RWPE1 (cell line): ENCODE measurements at regions of chr16 and their contacts with region 1.

Region 1: DNA sequence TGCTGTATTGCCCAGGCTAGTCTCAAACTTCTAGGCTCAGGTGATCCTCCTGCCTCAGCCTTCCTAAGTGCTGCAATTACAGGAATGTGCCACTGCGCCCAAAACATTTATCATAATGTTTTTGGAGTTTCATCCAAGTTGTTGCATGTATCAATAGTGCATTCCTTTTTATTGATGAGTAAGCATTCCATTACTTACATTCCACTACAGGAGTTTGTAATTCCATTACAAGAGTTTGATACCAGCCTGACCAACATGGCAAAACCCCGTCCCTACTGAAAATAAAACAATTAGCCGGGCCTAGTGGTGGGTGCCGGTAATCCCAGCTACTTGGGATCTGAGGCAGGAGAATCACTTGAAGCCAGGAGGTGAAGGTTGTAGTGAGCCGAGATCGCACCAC is 216.5 kb downstream of the SNX29 start:
- DNase-seq: no peak
- H3K27ac ChIP-seq: no peak overlapping the region
- CTCF ChIP-seq: no peak

Region 2: GRCh38 chr16:12178251-12178990 is 14.6 kb before region 1 on chr16:
- CTCF ChIA-PET with region 1: interaction called, 3 read pairs
- POLR2A ChIA-PET with region 1: interaction called, 16 read pairs
- DNase-seq: no peak
- H3K27ac ChIP-seq: no peak overlapping the region
- CTCF ChIP-seq: no peak

Region 3: DNA sequence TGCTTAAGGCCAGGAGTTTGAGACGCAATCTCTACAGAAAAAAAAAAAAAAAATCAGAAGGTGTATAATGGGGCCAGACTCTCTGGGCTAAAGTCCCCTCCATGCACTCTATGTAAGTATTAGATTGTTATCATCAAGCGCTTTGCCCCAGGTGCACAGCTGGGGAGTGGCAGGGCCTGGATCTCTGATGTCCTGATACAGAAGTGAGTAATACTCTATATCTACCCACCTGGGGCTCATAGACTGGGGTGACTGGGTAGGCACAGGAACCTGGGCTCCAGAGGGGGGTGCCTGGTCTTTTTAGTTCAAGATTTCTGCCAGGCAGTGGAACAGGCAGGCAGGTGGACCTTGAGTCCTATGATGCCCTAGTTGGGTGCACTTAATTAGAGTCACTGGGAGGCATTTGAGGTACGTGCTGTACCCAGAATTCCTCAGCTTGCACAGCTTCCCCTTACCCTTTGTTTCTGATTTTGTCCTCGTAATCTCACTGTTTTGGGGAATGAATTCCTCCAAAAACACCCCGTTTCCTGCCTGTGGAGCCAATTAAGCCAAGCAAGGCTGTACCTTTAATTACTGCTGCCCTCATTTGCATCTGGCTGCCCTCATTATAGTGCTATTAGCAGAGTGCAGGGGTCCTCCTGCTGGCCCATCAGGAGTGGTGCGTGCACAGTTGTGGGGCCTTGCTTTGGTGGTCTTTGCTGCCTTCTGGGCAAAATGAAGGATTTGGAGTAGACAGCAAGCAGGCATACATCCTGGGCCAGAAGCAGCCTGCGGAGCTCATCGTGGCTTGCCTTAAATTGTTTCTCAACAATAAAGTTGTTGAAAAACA is 22.5 kb after region 1 on chr16:
- CTCF ChIA-PET with region 1: no interaction called
- POLR2A ChIA-PET with region 1: no interaction called
- DNase-seq: no peak
- H3K27ac ChIP-seq: no peak overlapping the region
- CTCF ChIP-seq: no peak

Region 4: DNA sequence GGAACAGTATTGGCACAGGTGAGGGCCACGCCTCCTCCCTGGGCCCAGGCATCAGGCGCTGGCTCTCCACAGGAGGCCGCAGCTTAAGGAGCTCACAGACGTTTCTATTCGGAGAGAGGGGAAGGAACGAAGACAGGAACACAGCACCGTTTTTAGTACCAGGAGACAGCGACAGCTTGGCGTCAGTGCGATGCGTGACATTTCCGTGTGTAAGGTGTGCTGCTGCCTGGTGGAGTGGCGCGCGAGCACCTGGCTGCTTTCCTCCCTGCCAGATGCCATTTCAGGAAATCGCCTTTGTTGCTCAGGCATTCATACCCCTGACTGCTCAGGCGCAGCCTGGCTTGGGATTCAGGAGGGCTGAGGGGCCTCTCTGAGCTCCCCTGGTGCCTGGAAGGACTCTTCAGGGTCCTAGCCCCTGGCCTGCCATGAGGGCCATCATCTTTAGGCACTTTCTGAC is 243.2 kb after region 1 on chr16:
- CTCF ChIA-PET with region 1: no interaction called
- POLR2A ChIA-PET with region 1: no interaction called
- DNase-seq: no peak
- H3K27ac ChIP-seq: no peak overlapping the region
- CTCF ChIP-seq: no peak